Activated CD4-positive, alpha-beta T cell treated with anti-CD3 and anti-CD28 coated beads, Interleukin-2, amount 10 ng/mL, durations not matched to agents 24 days and 14 days (primary cell): ENCODE measurements at regions of chr1 and their contacts with region 1.

Region 1: DNA sequence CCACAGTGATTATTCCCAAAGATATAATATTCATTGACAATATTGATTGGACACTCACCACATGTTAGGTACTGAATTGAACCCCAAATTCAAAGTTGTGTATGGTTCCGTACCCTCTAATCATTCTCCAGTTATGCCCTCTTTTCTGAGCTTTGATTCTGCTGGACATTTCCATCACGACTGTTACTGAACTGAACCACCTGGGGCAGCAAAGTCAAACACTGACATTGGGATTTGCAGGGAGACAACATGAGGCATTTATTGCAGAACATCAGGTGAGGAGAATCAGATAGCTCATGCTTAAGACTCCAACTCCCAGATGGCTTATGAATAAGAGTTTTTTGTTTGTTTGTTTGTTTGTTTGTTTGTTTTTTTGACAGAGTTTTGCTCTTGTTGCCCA is 420.9 kb downstream of the DISC1 start:
- DNase-seq: no peak
- H3K4me3 Mint-ChIP-seq: no peak overlapping the region
- H3K27ac Mint-ChIP-seq: no peak overlapping the region
- H3K4me1 Mint-ChIP-seq: no peaks in the 10 kb centered on the region
- H3K27me3 Mint-ChIP-seq: peaks cover 7% of the 10 kb centered on the region

Region 2: GRCh38 chr1:231866392-231867331 is 180.8 kb before region 1 on chr1:
- intact Hi-C with region 1: loop called (anchors 10 kb)
- DNase-seq: peak; percentile 84
- H3K4me3 Mint-ChIP-seq: no peak overlapping the region
- H3K27ac Mint-ChIP-seq: no peak overlapping the region
- H3K4me1 Mint-ChIP-seq: peaks cover 4% of the 10 kb centered on the region
- H3K27me3 Mint-ChIP-seq: no peaks in the 10 kb centered on the region

Region 3: DNA sequence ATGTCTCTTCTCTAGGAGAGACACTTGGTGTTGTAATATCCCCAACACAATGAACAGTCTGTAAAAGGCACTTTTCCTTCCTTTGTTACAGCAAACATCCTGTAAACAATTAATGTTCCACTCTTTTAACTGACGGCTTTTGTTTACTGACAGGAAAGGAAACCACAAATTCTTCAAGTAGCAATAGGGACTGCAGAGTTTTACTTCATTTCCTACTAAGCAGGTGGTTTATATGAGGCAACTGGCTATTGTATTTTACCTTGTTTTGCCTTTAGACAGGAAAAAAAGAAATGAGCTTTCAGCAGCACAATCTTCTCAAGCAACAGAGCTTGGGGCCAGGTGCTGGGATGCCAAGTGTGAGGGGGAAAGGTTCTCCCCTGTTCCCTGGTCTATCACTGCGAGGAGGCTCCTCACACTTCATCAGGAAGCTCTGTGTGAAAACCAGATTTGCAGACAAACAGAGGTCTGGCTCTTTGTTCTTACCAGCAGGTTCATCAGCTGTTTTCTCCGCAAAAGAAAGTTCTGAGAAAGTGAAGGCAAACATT is 531.2 kb after region 1 on chr1:
- intact Hi-C with region 1: no loop called
- DNase-seq: peak; percentile 79
- H3K4me3 Mint-ChIP-seq: peak overlapping the region; percentile 65
- H3K27ac Mint-ChIP-seq: peak overlapping the region; percentile 81
- H3K4me1 Mint-ChIP-seq: peaks cover 42% of the 10 kb centered on the region
- H3K27me3 Mint-ChIP-seq: no peaks in the 10 kb centered on the region